GM23248 (cell line): ENCODE measurements at regions of chr3 and their contacts with region 1.

Region 1: GRCh38 chr3:74353039-74353438 is 261.4 kb downstream of the CNTN3 start:
- DNase-seq: peak; percentile 4
- H3K4me3 ChIP-seq: no peak overlapping the region
- H3K27ac ChIP-seq: no peak overlapping the region
- H3K4me1 ChIP-seq: peaks cover 7% of the 10 kb centered on the region; the same call in 1 of the 2 replicates
- H3K27me3 ChIP-seq: no peaks in the 10 kb centered on the region

Region 2: DNA sequence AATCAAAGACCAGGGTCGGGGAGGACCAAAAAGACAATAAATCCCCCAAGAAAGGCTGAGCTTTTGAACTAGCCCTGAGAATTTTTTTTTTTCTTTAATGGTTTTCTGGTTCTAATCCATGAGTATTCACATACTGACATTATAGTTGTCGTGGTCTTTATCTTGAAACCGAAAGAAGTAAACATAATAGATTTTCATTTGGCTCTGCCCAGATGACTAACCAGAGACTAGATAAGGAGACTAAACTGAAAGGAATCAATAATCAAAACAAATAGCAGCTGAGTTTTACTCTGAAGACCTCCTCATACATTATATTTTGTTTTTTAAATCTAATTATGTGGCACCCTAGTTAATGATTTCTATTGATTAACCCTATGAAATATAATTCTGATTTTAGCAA is 119.9 kb before region 1 on chr3:
- in situ Hi-C with region 1: no loop called
- DNase-seq: no peak
- H3K4me3 ChIP-seq: no peak overlapping the region
- H3K27ac ChIP-seq: no peak overlapping the region
- H3K4me1 ChIP-seq: no peaks in the 10 kb centered on the region
- H3K27me3 ChIP-seq: no peaks in the 10 kb centered on the region

Region 3: DNA sequence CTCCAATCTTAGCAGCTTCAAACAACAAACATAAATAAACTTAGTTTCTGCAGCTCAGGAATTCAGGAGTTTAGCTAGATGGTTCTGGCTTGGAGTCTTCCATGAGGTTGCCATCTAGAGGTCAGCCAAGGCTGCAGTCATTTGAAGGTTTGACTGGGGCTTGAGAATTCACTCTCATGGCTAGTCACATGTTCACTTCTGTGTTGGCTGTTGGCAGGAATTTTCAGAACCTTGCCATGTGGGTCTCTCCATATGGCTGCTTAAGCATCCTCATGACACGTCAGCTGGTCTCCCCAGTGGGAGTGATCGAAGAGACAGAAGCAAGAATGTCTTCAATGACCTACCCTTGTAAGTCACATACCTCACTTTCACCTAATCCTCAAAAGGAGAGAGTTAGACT is 530.7 kb after region 1 on chr3:
- in situ Hi-C with region 1: loop called (anchors 25 kb)
- DNase-seq: peak; percentile 65
- H3K4me3 ChIP-seq: no peak overlapping the region
- H3K27ac ChIP-seq: no peak overlapping the region
- H3K4me1 ChIP-seq: no peaks in the 10 kb centered on the region
- H3K27me3 ChIP-seq: 0 out of 2 replicates have a peak, but pooled peaks cover 4% of the 10 kb centered on the region